Head of caudate nucleus (tissue), 42 donors: ENCODE measurements at regions of chr11 and their contacts with region 1.

Region 1: GRCh38 chr11:118051611-118052461 is 25.0 kb upstream of the TMPRSS4 start:
- DNase-seq: peak in 3 of 42 donors; percentile 21 to 41 (median 32)

Region 2: GRCh38 chr11:117743123-117743815 is 308.6 kb before region 1 on chr11:
- intact Hi-C with region 1: no loop called
- DNase-seq: no peak

Region 3: DNA sequence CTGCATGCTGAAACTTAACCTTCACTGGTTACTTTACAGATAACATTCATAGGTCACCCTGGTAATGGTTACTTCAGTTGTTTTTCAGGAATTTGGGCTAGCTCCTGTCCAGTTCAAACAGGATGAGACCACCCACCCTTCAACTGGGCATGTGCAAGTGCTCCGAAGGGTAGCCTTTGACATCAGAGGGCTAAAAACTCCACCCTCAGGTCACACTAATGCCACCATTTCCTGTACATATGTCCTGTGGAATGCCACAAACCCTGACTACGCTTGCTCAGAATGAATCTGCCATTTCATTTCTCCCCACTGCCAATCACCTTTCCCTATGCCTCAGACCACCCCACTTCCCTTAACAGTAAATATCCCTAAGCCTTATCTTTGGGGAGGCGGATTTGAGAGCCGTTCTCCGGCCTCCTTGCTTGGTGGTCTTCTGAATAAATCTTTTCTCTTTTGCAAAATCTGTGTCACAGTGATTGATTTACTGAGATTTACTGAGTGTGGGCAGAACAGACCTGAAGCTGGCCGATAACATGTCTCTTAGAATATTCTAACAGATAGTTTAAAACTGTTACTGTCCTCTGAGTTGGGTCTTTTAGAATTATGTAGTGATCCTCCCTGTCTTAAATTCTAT is 201.9 kb before region 1 on chr11:
- intact Hi-C with region 1: loop called (anchors 5 kb)
- DNase-seq: peak in 6 of 42 donors; percentile 1 to 29 (median 4)